Heart left ventricle (tissue), 16 donors: ENCODE measurements at regions of chr17 and their contacts with region 1.

Region 1: DNA sequence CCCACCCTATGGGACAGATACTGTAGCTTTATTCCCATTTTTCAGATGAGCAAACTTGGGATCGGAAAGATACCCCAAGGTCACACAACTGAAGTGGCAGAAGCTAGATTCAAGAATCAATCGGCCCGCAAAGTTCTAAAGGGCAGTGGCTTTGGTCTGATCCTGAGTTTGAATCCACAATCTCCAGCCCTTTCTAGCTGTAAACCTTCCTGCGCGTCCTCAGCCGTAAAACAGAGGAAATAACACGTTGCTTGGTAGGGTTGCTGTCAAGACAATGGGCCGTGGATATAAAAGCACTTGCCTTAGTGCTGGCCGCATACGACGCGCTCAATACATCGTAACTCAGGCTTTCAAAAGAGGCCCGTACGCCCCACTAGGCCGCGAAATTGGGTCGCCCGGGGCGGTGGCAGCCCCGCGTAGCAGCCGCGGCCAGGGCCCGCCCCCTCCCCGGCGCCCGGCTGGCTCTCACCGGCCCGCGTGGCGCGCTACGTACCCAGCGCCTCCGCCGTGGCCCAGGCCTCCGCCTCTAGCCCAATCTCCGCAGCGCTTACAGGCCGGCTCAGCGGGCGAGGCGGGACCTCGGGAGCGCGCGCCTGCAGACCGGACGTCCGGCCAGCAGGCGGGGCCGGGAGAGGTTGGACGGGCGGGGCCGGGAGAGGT is at the start of gene DCAKD:
- DNase-seq: peak; percentile 94 to 97 (median 96)
- ATAC-seq: peak; percentile 98 to 100 (median 99)
- H3K4me3 ChIP-seq: peak within 1 kb of the TSS; percentile 58 to 89 (median 70)
- H3K27ac ChIP-seq: peak within 1 kb of the TSS; percentile 89 to 97 (median 92)
- H3K4me1 ChIP-seq: peaks cover 0 to 27% (median 13%) of the 10 kb centered on the region in 12 donors
- H3K27me3 ChIP-seq: no peaks in the 10 kb centered on the region
- CTCF ChIP-seq: peak in 1 of 12 donors; percentile 7
- POLR2A ChIP-seq: peak in 1 of 2 donors; percentile 88
- total RNA-seq, gene DCAKD: 24.7 to 60.9 (median 33.9) TPM

Region 2: DNA sequence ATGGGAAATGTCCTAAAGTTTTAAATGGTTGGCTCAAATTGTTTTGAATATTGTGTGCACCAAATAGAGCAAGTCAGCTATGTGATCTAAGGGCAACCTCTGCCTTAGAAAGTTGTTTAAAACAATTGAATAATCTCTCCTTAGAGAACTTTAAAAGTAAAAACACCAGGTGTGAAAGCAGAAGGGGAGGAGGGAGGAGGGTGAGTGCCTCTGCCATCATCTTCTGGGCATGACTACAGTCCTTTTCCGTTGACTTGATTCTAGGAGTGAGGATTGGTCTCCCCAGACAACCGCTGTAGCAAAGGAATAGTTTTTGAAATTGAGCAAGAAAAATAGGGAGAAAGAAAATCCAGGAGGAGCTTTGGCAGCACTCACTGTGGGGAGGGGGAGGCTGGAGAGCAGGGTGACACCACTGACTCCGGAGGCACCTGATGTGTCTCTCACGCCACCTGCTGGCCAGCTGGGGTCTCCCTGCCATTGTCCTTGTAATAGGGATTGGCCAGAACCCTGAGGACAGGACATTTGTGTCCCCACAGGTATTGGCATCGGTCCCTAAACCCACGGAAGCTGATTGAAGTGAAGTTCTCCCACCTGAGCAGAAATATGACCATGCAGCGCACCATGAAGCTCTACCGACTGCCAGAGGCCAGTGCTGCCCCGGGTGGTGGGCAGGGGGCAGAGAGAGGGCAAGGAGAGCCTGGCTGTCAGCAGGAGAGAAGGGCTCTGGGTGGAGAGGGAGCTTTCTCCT is 47.9 kb after region 1 on chr17:
- intact Hi-C with region 1: no loop called
- DNase-seq: peak; percentile 82 to 93 (median 84)
- ATAC-seq: peak; percentile 55 to 83 (median 75)
- H3K4me3 ChIP-seq: no peak overlapping the region
- H3K27ac ChIP-seq: peak overlapping the region in 5 of 12 donors; percentile 29 to 72 (median 42)
- H3K4me1 ChIP-seq: peaks cover 0 to 48% (median 19%) of the 10 kb centered on the region in 12 donors
- H3K27me3 ChIP-seq: no peaks in the 10 kb centered on the region
- CTCF ChIP-seq: peak; percentile 85 to 96 (median 90)
- POLR2A ChIP-seq: no peak

Region 3: GRCh38 chr17:45110668-45111611 is 59.8 kb after region 1 on chr17:
- intact Hi-C with region 1: loop called in 1 of 10 experiments (anchors 5 kb)
- DNase-seq: peak in 4 of 5 donors; percentile 58 to 76 (median 72)
- ATAC-seq: peak; percentile 78 to 90 (median 80)
- H3K4me3 ChIP-seq: no peak overlapping the region
- H3K27ac ChIP-seq: peak overlapping the region; percentile 75 to 95 (median 88)
- H3K4me1 ChIP-seq: peaks cover 0 to 67% (median 29%) of the 10 kb centered on the region in 12 donors
- H3K27me3 ChIP-seq: no peaks in the 10 kb centered on the region
- CTCF ChIP-seq: peak in 2 of 12 donors; percentile 13 to 20
- POLR2A ChIP-seq: no peak